ENCODE measurements at regions of chr11 and their contacts with region 1.

Region 1: GRCh38 chr11:66408488-66409214 is 12.2 kb upstream of the NPAS4 start:
- DNase-seq: peak; percentile 90
- ATAC-seq: peak; percentile 84
- H3K4me3 ChIP-seq: peak overlapping the region; percentile 49; the same call in 1 of the 2 replicates
- H3K27ac ChIP-seq: no peak overlapping the region
- H3K4me1 ChIP-seq: no peaks in the 10 kb centered on the region; the same call in 1 of the 2 replicates
- H3K27me3 ChIP-seq: peaks cover 83% of the 10 kb centered on the region
- CTCF ChIP-seq: peak; percentile 100

Region 2: GRCh38 chr11:66344550-66345315 is 63.9 kb before region 1 on chr11 and contains the start of gene BRMS1:
- CTCF ChIA-PET with region 1: no interaction called
- POLR2A ChIA-PET with region 1: no interaction called
- intact Hi-C with region 1: no loop called
- DNase-seq: peak; percentile 99
- ATAC-seq: peak; percentile 69
- H3K4me3 ChIP-seq: peak within 1 kb of the TSS; percentile 94
- H3K27ac ChIP-seq: peak within 1 kb of the TSS; percentile 21; the same call in 1 of the 2 replicates
- H3K4me1 ChIP-seq: peaks cover 35% of the 10 kb centered on the region
- H3K27me3 ChIP-seq: no peaks in the 10 kb centered on the region
- CTCF ChIP-seq: no peak
- total RNA-seq, gene BRMS1: 123 and 176 TPM in 2 replicates

Region 3: DNA sequence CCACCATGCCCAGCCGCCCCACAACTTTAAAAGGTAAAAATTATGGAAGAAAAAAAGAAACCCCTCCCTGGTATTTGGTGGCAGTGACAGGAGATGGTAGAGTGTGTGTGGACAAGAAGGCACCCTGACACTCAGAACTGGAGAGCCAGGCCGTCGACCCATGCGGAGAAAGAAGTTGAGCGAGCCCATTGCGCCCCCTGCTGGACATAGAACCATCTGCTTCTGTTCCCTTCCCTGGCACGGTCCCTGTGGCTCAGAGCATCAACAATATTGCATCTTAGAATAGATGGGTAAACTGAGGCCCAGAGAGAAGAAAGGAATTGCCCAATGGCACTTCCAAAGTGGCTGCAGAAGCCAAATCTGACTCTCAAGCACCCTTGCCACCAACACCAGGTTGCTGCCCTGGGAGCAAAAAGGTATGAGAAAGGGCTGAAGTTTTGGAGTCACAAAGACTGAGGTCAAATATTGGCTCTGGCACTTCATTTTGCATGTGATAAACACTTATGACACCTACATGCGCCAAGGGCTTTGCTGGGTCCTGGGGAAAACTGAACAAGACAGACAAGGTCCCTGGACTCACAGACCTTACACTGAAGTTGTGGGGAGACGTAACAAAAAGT is 21.4 kb after region 1 on chr11:
- CTCF ChIA-PET with region 1: interaction called, 3 read pairs
- POLR2A ChIA-PET with region 1: no interaction called
- intact Hi-C with region 1: loop called (anchors 1 kb)
- DNase-seq: peak; percentile 80
- ATAC-seq: peak; percentile 96
- H3K4me3 ChIP-seq: no peak overlapping the region
- H3K27ac ChIP-seq: no peak overlapping the region
- H3K4me1 ChIP-seq: no peaks in the 10 kb centered on the region
- H3K27me3 ChIP-seq: no peaks in the 10 kb centered on the region
- CTCF ChIP-seq: peak; percentile 94

Region 4: GRCh38 chr11:66438504-66439466 is 30.1 kb after region 1 on chr11 and contains the start of gene MRPL11:
- CTCF ChIA-PET with region 1: interaction called, 3 read pairs
- POLR2A ChIA-PET with region 1: no interaction called
- intact Hi-C with region 1: loop called (anchors 2 kb)
- DNase-seq: peak; percentile 99
- ATAC-seq: peak; percentile 88
- H3K4me3 ChIP-seq: peak within 1 kb of the TSS; percentile 77
- H3K27ac ChIP-seq: peak within 1 kb of the TSS; percentile 29
- H3K4me1 ChIP-seq: peaks cover 15% of the 10 kb centered on the region
- H3K27me3 ChIP-seq: no peaks in the 10 kb centered on the region
- CTCF ChIP-seq: peak; percentile 83
- total RNA-seq, gene MRPL11: 214 and 321 TPM in 2 replicates

Region 5: GRCh38 chr11:66480117-66480938 is 71.7 kb after region 1 on chr11 and contains the start of gene DPP3:
- CTCF ChIA-PET with region 1: interaction called, 3 read pairs
- POLR2A ChIA-PET with region 1: no interaction called
- intact Hi-C with region 1: loop called (anchors 1 kb)
- DNase-seq: peak; percentile 99
- ATAC-seq: peak; percentile 89
- H3K4me3 ChIP-seq: peak within 1 kb of the TSS; percentile 78
- H3K27ac ChIP-seq: peak within 1 kb of the TSS; percentile 53
- H3K4me1 ChIP-seq: peaks cover 14% of the 10 kb centered on the region
- H3K27me3 ChIP-seq: no peaks in the 10 kb centered on the region
- CTCF ChIP-seq: no peak
- total RNA-seq, gene DPP3: 135 and 165 TPM in 2 replicates

Region 6: DNA sequence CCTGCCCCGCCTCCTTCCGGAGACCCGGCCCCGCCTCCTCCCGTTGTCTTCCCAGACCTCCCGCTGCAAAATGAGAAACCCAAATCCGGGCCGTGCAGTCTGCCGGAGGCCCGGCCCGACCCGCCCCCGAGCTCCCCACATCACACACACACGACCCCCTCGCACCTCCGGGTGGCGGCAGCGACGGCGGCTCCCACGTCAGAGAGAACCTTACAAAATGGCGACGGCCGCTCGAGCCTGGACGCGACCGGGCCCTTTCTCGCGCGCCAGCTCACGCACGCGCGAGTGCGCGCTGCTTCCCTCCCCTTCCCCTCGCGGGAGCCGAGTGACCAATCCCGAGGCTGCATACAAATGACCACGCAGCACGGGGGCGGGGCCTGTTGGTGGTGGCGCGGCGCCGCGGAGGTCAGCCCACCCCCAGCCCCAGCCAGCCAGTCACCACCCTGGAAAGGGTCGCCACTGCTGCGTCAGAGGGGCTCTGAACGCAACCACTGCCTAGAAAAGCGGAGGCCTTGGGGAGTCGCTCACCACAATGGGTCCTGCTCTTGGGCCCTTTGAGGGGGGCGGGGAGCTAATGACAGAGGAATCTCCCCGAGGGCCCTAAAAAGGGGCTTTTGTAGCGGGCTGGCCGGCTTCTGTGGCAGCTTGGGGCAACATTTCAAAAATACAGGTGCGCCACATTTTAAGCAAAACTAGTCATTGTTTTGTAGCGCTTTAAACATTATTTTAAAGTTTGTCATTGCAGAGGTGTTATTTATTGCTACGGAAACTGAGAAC is 269.1 kb after region 1 on chr11 and contains the start of gene RBM4B:
- CTCF ChIA-PET with region 1: interaction called, 6 read pairs
- POLR2A ChIA-PET with region 1: no interaction called
- intact Hi-C with region 1: loop called (anchors 2 kb)
- DNase-seq: peak; percentile 97
- ATAC-seq: peak; percentile 92
- H3K4me3 ChIP-seq: peak within 1 kb of the TSS; percentile 68
- H3K27ac ChIP-seq: peak within 1 kb of the TSS; percentile 86
- H3K4me1 ChIP-seq: peaks cover 35% of the 10 kb centered on the region
- H3K27me3 ChIP-seq: no peaks in the 10 kb centered on the region
- CTCF ChIP-seq: no peak
- total RNA-seq, gene RBM4B: 31.4 and 40.2 TPM in 2 replicates